Activated T-helper 2 cell treated with anti-CD3 and anti-CD28 coated beads, Interferon-gamma antibody, Interleukin-2, Interleukin-4, amounts not matched to agents 10 μg/mL and 5 μg/mL and 100 μg/mL, durations not matched to agents 14 hours and 24 hours and 36 hours (primary cell): ENCODE measurements at regions of chr4 and their contacts with region 1.

Region 1: GRCh38 chr4:140049024-140049848 is 104.7 kb downstream of the MAML3 start:
- DNase-seq: peak; percentile 52
- H3K4me3 Mint-ChIP-seq: peak overlapping the region; percentile 74
- H3K27ac Mint-ChIP-seq: peak overlapping the region; percentile 78
- H3K4me1 Mint-ChIP-seq: peaks cover 55% of the 10 kb centered on the region
- H3K27me3 Mint-ChIP-seq: peaks cover 36% of the 10 kb centered on the region

Region 2: GRCh38 chr4:139734875-139735380 is 314.3 kb before region 1 on chr4:
- intact Hi-C with region 1: loop called (anchors 2 kb)
- DNase-seq: peak; percentile 35
- H3K4me3 Mint-ChIP-seq: peak overlapping the region; percentile 49
- H3K27ac Mint-ChIP-seq: no peak overlapping the region
- H3K4me1 Mint-ChIP-seq: peaks cover 11% of the 10 kb centered on the region
- H3K27me3 Mint-ChIP-seq: peaks cover 54% of the 10 kb centered on the region

Region 3: GRCh38 chr4:140012688-140013486 is 36.3 kb before region 1 on chr4:
- intact Hi-C with region 1: loop called (anchors 5 kb)
- DNase-seq: peak; percentile 29
- H3K4me3 Mint-ChIP-seq: no peak overlapping the region
- H3K27ac Mint-ChIP-seq: no peak overlapping the region
- H3K4me1 Mint-ChIP-seq: peaks cover 9% of the 10 kb centered on the region
- H3K27me3 Mint-ChIP-seq: peaks cover 42% of the 10 kb centered on the region

Region 4: GRCh38 chr4:140095694-140096482 is 46.7 kb after region 1 on chr4:
- intact Hi-C with region 1: loop called (anchors 1 kb)
- DNase-seq: peak; percentile 61
- H3K4me3 Mint-ChIP-seq: peak overlapping the region; percentile 86
- H3K27ac Mint-ChIP-seq: peak overlapping the region; percentile 99
- H3K4me1 Mint-ChIP-seq: peaks cover 82% of the 10 kb centered on the region
- H3K27me3 Mint-ChIP-seq: no peaks in the 10 kb centered on the region